ENCODE measurements at regions of chr22 and their contacts with region 1.

Region 1: GRCh38 chr22:21982338-21982965 is at the start of gene TOP3B:
- DNase-seq: peak; percentile 99 to 100 (median 100)
- ATAC-seq: peak; percentile 84
- H3K4me3 ChIP-seq: peak within 1 kb of the TSS; percentile 63
- H3K27ac ChIP-seq: peak within 1 kb of the TSS; percentile 70
- H3K4me1 ChIP-seq: peaks cover 13 to 26% of the 10 kb centered on the region in 2 experiments; a peak in 4 of 5 replicates
- H3K27me3 ChIP-seq: no peaks in the 10 kb centered on the region; a peak in 1 of 5 replicates
- CTCF ChIP-seq: peak in 1 of 3 experiments; percentile 30; a peak in 1 of 6 replicates
- EP300 ChIP-seq: peak; percentile 93
- POLR2A ChIP-seq: no peak
- RAD21 ChIP-seq: no peak
- polyA plus RNA-seq, gene TOP3B: 3.0 to 11.5 TPM

Region 2: DNA sequence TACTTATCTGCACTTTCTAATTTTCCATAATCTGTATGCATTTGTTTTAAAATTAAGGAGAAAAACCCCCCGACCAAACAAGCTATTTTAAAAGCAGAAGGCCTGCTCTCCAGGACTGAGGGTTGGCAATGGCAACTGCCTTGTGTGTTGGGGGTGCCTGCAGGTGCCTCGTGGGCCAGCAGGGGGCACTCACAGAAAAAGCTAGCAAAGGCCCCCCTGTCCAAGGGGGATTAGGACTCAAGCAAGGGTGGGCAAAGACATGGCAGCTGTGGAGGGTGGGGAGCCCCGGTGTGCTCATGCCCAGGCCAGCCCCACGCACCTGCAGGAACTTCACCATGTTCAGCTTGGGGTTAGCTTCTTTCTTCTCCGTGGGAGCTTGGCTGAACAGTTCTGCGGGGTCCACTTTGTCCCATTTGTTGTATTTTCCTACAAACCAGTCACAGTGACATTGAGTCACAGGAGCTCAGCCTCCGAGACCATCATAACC is 10.1 kb before region 1 on chr22:
- CTCF ChIA-PET with region 1: no interaction called
- POLR2A ChIA-PET with region 1: interaction called, 382 read pairs
- in situ Hi-C with region 1: no loop called
- intact Hi-C with region 1: no loop called
- DNase-seq: peak; percentile 91 to 100 (median 99)
- ATAC-seq: peak; percentile 86
- H3K4me3 ChIP-seq: no peak overlapping the region
- H3K27ac ChIP-seq: no peak overlapping the region
- H3K4me1 ChIP-seq: peaks cover 0 to 19% of the 10 kb centered on the region in 2 experiments; a peak in 1 of 5 replicates
- H3K27me3 ChIP-seq: no peaks in the 10 kb centered on the region
- CTCF ChIP-seq: peak; percentile 97 to 100 (median 99)
- EP300 ChIP-seq: no peak
- POLR2A ChIP-seq: no peak
- RAD21 ChIP-seq: peak in 1 of 2 experiments; percentile 88; a peak in 2 of 4 replicates

Region 3: GRCh38 chr22:22001664-22002525 is 19.4 kb after region 1 on chr22:
- CTCF ChIA-PET with region 1: no interaction called
- POLR2A ChIA-PET with region 1: interaction called, 176 read pairs
- in situ Hi-C with region 1: no loop called
- intact Hi-C with region 1: no loop called
- DNase-seq: peak in 2 of 4 experiments; percentile 82 to 89
- ATAC-seq: peak; percentile 84
- H3K4me3 ChIP-seq: no peak overlapping the region
- H3K27ac ChIP-seq: peak overlapping the region; percentile 12; the same call in 1 of the 3 replicates
- H3K4me1 ChIP-seq: peaks cover 11 to 29% of the 10 kb centered on the region in 2 experiments
- H3K27me3 ChIP-seq: peaks cover 0 to 6% of the 10 kb centered on the region in 2 experiments; a peak in 3 of 5 replicates
- CTCF ChIP-seq: no peak
- EP300 ChIP-seq: no peak
- POLR2A ChIP-seq: no peak
- RAD21 ChIP-seq: no peak

Region 4: DNA sequence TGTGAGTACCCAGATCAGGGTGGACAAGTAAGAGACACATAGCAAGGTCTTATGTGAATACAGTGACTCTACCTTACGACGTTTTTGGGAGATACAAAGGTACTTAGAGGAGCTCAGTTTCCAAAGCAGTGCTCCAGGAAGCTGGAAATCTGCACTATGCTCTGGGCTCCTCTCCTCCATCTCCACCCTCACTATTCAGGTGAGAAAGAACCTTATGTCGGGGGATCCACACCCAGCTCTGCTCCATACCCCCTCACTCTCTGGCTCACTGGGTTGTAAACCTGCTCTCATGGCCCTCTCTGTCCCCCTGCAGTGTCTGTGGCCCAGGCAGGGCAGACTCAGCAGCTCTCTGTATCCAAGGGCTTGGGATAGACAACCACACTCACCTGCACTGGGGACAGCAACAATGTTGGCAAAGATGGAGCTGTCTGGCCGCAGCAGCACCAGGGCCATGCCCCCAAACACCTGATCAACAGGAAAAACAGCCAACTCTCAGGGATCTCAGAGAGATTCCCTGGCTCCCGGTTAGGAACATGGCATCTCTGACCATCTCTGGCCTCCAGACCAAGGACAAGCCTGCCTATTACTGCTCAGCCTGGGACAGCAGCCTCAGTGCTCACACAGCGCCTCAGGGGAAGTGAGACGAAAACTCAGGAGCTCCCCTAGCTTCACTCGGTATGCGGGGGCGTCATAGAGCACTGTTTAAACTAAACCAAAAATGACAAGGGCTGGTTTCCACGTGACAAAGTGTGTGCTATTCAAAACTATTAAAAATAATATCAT is 61.0 kb after region 1 on chr22:
- CTCF ChIA-PET with region 1: no interaction called
- POLR2A ChIA-PET with region 1: interaction called, 5 read pairs
- in situ Hi-C with region 1: no loop called
- intact Hi-C with region 1: loop called (anchors 5 kb)
- DNase-seq: peak in 1 of 4 experiments; percentile 63
- ATAC-seq: peak; percentile 72
- H3K4me3 ChIP-seq: no peak overlapping the region
- H3K27ac ChIP-seq: no peak overlapping the region
- H3K4me1 ChIP-seq: peaks cover 0 to 5% of the 10 kb centered on the region in 2 experiments; a peak in 2 of 5 replicates
- H3K27me3 ChIP-seq: peaks cover 28 to 40% of the 10 kb centered on the region in 2 experiments
- CTCF ChIP-seq: no peak
- EP300 ChIP-seq: no peak
- POLR2A ChIP-seq: no peak
- RAD21 ChIP-seq: no peak

Region 5: GRCh38 chr22:22103078-22103875 is 120.8 kb after region 1 on chr22:
- CTCF ChIA-PET with region 1: no interaction called
- POLR2A ChIA-PET with region 1: interaction called, 4 read pairs
- in situ Hi-C with region 1: no loop called
- intact Hi-C with region 1: loop called (anchors 2 kb)
- DNase-seq: peak; percentile 86 to 97 (median 93)
- ATAC-seq: peak; percentile 87
- H3K4me3 ChIP-seq: no peak overlapping the region
- H3K27ac ChIP-seq: no peak overlapping the region
- H3K4me1 ChIP-seq: peaks cover 0 to 2% of the 10 kb centered on the region in 2 experiments; a peak in 2 of 5 replicates
- H3K27me3 ChIP-seq: peaks cover 21 to 37% of the 10 kb centered on the region in 2 experiments
- CTCF ChIP-seq: no peak
- EP300 ChIP-seq: no peak
- POLR2A ChIP-seq: no peak
- RAD21 ChIP-seq: no peak

Region 6: GRCh38 chr22:22195265-22196017 is 213.0 kb after region 1 on chr22:
- CTCF ChIA-PET with region 1: no interaction called
- POLR2A ChIA-PET with region 1: interaction called, 5 read pairs
- in situ Hi-C with region 1: no loop called
- intact Hi-C with region 1: loop called (anchors 5 kb)
- DNase-seq: peak; percentile 99 to 100 (median 100)
- ATAC-seq: peak; percentile 99
- H3K4me3 ChIP-seq: no peak overlapping the region
- H3K27ac ChIP-seq: no peak overlapping the region
- H3K4me1 ChIP-seq: peaks cover 0 to 3% of the 10 kb centered on the region in 2 experiments; a peak in 1 of 5 replicates
- H3K27me3 ChIP-seq: peaks cover 14 to 33% of the 10 kb centered on the region in 2 experiments; a peak in 4 of 5 replicates
- CTCF ChIP-seq: peak; percentile 100
- EP300 ChIP-seq: peak; percentile 69
- POLR2A ChIP-seq: no peak
- RAD21 ChIP-seq: peak; percentile 93 to 100

Region 7: DNA sequence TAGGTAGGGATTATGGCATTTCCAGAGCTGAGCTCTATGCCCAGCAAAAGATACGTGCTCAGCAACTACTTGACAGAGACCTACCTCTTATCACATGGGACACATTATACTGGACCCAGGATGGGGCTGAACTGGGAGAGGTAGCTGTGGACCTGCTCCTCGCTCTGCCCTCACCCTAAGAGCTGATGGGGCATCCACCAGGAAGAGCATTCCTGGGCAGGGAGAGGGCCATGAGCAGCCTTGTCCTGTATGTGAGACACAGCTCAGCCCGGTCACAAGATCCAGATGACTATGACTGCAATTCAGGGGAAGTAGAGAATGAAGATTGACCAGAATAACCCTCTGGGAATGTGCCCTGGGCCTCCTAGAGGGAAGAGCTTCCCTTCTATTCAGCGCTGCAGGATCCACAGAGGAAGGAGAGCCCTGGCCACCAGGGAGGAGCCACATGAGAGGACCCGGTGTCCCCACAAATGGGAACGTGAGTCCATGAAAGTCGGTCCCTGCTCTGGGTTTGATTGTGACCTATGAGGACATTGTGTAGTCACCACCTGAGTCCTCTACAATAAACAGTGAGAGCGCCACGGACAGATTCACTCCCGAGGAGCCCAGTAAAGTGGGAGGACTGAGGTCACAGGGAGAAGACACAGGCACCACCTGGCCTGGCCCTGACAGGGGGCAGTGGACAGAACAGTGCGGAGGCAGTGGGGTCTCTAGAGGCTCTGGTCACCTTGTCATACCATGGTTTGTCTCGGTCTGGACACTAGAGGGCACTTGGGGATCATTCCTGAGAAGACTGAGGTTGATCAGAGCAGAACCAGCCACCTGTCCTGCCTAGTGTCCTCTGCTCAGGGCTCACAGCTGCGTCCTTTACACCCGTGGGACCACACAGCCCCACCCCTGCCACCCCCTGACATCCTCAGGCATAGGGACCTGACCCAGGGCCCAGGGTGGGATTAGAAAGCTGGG is 426.6 kb after region 1 on chr22:
- CTCF ChIA-PET with region 1: no interaction called
- POLR2A ChIA-PET with region 1: no interaction called
- in situ Hi-C with region 1: no loop called
- intact Hi-C with region 1: no loop called
- DNase-seq: peak; percentile 86 to 91 (median 87)
- ATAC-seq: peak; percentile 98
- H3K4me3 ChIP-seq: no peak overlapping the region
- H3K27ac ChIP-seq: no peak overlapping the region
- H3K4me1 ChIP-seq: no peaks in the 10 kb centered on the region
- H3K27me3 ChIP-seq: peaks cover 21 to 49% of the 10 kb centered on the region in 2 experiments; a peak in 4 of 5 replicates
- CTCF ChIP-seq: peak in 2 of 3 experiments; percentile 98 to 99; a peak in 4 of 6 replicates
- EP300 ChIP-seq: no peak
- POLR2A ChIP-seq: no peak
- RAD21 ChIP-seq: no peak

Measured in K562 (cell line).